ENCODE measurements at regions of chr5 and their contacts with region 1.

Region 1: GRCh38 chr5:54895816-54896341 is 89.5 kb downstream of the ESM1 start:
- DNase-seq: peak; percentile 14 to 49
- ATAC-seq: peak; percentile 85 to 89
- H3K4me3 ChIP-seq: no peak overlapping the region
- H3K27ac ChIP-seq: no peak overlapping the region
- H3K4me1 ChIP-seq: no peaks in the 10 kb centered on the region
- CTCF ChIP-seq: peak; percentile 52
- EP300 ChIP-seq: no peak
- POLR2A ChIP-seq: no peak
- RAD21 ChIP-seq: peak; percentile 55 to 62; a peak in 4 of 5 replicates

Region 2: DNA sequence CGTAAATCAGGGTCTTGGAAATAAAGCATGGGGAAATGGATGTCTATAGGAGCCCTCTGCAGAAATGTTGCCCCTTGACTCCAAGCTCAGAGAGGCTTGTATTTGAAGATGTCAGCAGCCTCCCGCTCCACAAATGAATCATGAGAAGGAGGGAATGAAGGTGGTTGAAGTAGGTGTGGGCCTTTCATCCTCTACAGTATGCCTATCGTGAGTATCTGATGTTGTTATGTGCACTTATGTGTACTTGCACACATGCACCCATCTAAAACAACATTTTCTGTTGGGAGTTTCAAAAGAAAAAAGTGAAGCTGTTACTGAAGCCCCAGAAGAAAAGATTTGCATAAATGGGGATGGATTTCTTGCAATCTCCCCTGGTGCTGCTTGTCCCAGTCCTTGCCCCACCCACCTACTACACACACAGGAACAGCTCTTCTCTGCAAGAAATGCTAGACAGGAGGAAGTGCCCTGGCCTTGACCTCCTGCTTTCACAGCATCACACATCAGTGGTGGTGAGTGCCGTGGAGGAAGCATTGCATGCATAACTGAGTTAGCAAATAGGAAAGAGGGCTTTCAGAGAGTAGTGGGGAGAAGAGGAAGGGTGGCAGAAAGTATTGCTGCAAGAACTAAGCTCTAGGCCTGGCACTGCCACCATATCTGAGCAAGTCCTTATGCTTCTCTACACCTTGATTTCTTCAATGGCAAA is 222.2 kb before region 1 on chr5:
- CTCF ChIA-PET with region 1: no interaction called
- POLR2A ChIA-PET with region 1: no interaction called
- DNase-seq: no peak
- ATAC-seq: no peak
- H3K4me3 ChIP-seq: no peak overlapping the region
- H3K27ac ChIP-seq: no peak overlapping the region
- H3K4me1 ChIP-seq: no peaks in the 10 kb centered on the region
- CTCF ChIP-seq: no peak
- EP300 ChIP-seq: no peak
- POLR2A ChIP-seq: no peak
- RAD21 ChIP-seq: no peak

Region 3: GRCh38 chr5:54874373-54874921 is 21.4 kb before region 1 on chr5:
- CTCF ChIA-PET with region 1: interaction called, 17 read pairs
- POLR2A ChIA-PET with region 1: no interaction called
- DNase-seq: no peak
- ATAC-seq: no peak
- H3K4me3 ChIP-seq: no peak overlapping the region
- H3K27ac ChIP-seq: no peak overlapping the region
- H3K4me1 ChIP-seq: no peaks in the 10 kb centered on the region
- CTCF ChIP-seq: no peak
- EP300 ChIP-seq: no peak
- POLR2A ChIP-seq: no peak
- RAD21 ChIP-seq: no peak

Region 4: GRCh38 chr5:54883374-54884212 is 12.3 kb before region 1 on chr5:
- CTCF ChIA-PET with region 1: interaction called, 15 read pairs
- POLR2A ChIA-PET with region 1: no interaction called
- DNase-seq: no peak
- ATAC-seq: peak in 1 of 2 experiments; percentile 66; a peak in 3 of 6 replicates
- H3K4me3 ChIP-seq: peak overlapping the region; percentile 40
- H3K27ac ChIP-seq: peak overlapping the region in 1 of 2 experiments; percentile 59; a peak in 2 of 6 replicates
- H3K4me1 ChIP-seq: no peaks in the 10 kb centered on the region
- CTCF ChIP-seq: no peak
- EP300 ChIP-seq: no peak
- POLR2A ChIP-seq: no peak
- RAD21 ChIP-seq: no peak

Region 5: GRCh38 chr5:54905943-54906537 is 10.2 kb after region 1 on chr5:
- CTCF ChIA-PET with region 1: interaction called, 32 read pairs
- POLR2A ChIA-PET with region 1: no interaction called
- DNase-seq: peak; percentile 42 to 56
- ATAC-seq: peak in 1 of 2 experiments; percentile 73; a peak in 3 of 6 replicates
- H3K4me3 ChIP-seq: no peak overlapping the region
- H3K27ac ChIP-seq: no peak overlapping the region
- H3K4me1 ChIP-seq: no peaks in the 10 kb centered on the region
- CTCF ChIP-seq: peak; percentile 70
- EP300 ChIP-seq: no peak
- POLR2A ChIP-seq: no peak
- RAD21 ChIP-seq: peak; percentile 74 to 79

Region 6: DNA sequence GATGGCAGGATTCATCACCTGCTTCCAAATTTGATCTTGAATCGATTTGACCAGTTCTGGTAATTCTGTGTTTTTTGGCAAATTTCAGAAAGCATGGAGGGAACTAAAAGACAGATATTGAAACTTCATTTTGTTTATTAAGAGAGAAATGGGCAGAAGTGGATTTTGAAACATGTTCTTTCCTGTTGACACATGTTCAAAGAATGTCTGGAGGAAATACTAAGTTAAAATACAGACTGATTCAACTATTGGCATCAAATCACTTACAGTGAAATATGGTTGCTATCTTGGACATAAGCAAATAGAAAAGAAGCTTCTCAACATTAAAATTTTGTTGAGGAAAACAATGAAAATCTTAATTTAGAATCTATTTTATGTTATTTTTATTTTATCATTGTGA is 108.8 kb after region 1 on chr5:
- CTCF ChIA-PET with region 1: no interaction called
- POLR2A ChIA-PET with region 1: no interaction called
- DNase-seq: no peak
- ATAC-seq: no peak
- H3K4me3 ChIP-seq: no peak overlapping the region
- H3K27ac ChIP-seq: no peak overlapping the region
- H3K4me1 ChIP-seq: no peaks in the 10 kb centered on the region
- CTCF ChIP-seq: no peak
- EP300 ChIP-seq: no peak
- POLR2A ChIP-seq: no peak
- RAD21 ChIP-seq: no peak